Dendritic cell treated with granulocyte-macrophage colony-stimulating factor and Interleukin-4, amounts not matched to agents 40 ng/mL and 50 ng/mL, for 4 days (primary cell): ENCODE measurements at regions of chrX and their contacts with region 1.

Region 1: DNA sequence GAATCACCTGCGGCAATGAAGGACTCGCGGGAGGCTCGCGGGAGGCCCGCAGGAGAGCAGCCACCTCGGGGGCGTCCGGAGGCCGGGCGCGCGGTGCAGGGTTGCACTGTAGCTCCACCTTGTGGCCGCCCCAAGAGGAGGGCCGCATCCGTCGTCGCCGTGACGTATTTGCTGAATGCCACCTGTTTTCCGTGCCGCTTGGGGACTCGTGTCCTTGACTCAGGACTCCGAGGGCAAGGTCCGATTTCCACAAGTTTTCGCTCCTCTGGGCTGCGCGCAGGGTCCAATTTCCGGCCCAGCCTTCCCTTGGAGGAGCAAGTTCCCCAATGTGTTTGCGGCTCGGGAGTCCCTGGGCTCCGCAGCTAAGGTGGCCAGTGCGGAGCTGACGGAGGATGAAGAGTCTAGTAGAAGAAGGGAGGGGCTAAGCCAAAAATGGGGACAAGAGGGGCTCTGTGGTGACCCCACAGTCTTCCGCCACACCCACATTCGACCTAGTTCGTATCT is 10.7 kb upstream of the DLG3 start:
- H3K4me3 Mint-ChIP-seq: peak overlapping the region; percentile 81
- H3K27ac Mint-ChIP-seq: peak overlapping the region; percentile 83
- H3K4me1 Mint-ChIP-seq: peaks cover 44% of the 10 kb centered on the region
- H3K27me3 Mint-ChIP-seq: peaks cover 23% of the 10 kb centered on the region

Region 2: GRCh38 chrX:70336767-70337166 is 97.1 kb before region 1 on chrX:
- intact Hi-C with region 1: loop called (anchors 10 kb)
- H3K4me3 Mint-ChIP-seq: no peak overlapping the region
- H3K27ac Mint-ChIP-seq: no peak overlapping the region
- H3K4me1 Mint-ChIP-seq: no peaks in the 10 kb centered on the region
- H3K27me3 Mint-ChIP-seq: peaks cover 2% of the 10 kb centered on the region